Activated T-helper 2 cell treated with anti-CD3 and anti-CD28 coated beads, Interferon-gamma antibody, Interleukin-2, Interleukin-4, amounts not matched to agents 10 μg/mL and 5 μg/mL and 100 μg/mL, durations not matched to agents 14 hours and 24 hours and 36 hours (primary cell): ENCODE measurements at regions of chr3 and their contacts with region 1.

Region 1: DNA sequence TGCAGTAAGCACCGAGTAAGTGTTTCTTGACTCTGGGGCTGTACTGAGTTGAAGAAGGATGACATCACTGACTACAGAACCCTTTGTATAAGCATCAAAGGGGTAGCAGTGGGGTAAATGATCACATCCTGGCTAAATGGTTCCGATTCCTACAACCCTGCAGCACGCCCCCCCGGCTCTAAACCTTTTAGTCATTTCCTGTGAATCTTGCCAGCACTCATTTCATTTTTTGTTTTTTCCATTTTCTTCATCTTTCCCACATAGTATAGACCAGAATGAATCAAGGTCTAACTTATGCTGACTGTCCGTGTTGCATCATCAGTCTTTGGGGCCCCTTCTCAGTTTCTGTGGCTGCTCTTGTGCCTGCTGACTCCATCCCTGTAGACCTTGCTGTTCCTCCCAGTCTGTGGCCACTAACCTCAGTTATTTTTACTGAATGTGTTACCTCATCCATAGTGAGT is 383.1 kb upstream of the TPRG1 start:
- DNase-seq: peak; percentile 42
- H3K4me3 Mint-ChIP-seq: no peak overlapping the region
- H3K27ac Mint-ChIP-seq: no peak overlapping the region
- H3K4me1 Mint-ChIP-seq: peaks cover 2% of the 10 kb centered on the region
- H3K27me3 Mint-ChIP-seq: no peaks in the 10 kb centered on the region

Region 2: GRCh38 chr3:188294823-188295487 is 493.7 kb before region 1 on chr3:
- intact Hi-C with region 1: loop called (anchors 5 kb)
- DNase-seq: no peak
- H3K4me3 Mint-ChIP-seq: no peak overlapping the region
- H3K27ac Mint-ChIP-seq: no peak overlapping the region
- H3K4me1 Mint-ChIP-seq: peaks cover 66% of the 10 kb centered on the region
- H3K27me3 Mint-ChIP-seq: no peaks in the 10 kb centered on the region

Region 3: DNA sequence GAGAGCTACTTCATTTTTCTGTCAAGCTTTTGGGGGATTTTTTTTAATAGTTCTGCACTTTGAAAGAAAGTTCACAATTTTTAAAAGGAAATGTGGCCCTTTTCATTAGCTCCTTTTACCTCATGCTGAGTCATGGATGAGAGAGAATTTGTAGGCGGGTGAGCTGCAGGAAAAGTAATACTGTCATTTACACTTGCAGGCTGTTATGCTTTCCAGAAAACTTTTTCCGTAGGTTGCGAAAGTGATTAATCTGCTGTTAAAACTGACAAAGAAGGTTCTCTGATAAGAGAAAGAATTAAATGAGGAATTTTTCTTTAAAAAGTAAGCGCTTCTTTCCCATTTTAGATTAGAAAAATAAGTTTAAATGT is 204.5 kb before region 1 on chr3:
- intact Hi-C with region 1: loop called (anchors 1 kb)
- DNase-seq: no peak
- H3K4me3 Mint-ChIP-seq: peak overlapping the region; percentile 13
- H3K27ac Mint-ChIP-seq: peak overlapping the region; percentile 86
- H3K4me1 Mint-ChIP-seq: peaks cover 30% of the 10 kb centered on the region
- H3K27me3 Mint-ChIP-seq: no peaks in the 10 kb centered on the region

Region 4: DNA sequence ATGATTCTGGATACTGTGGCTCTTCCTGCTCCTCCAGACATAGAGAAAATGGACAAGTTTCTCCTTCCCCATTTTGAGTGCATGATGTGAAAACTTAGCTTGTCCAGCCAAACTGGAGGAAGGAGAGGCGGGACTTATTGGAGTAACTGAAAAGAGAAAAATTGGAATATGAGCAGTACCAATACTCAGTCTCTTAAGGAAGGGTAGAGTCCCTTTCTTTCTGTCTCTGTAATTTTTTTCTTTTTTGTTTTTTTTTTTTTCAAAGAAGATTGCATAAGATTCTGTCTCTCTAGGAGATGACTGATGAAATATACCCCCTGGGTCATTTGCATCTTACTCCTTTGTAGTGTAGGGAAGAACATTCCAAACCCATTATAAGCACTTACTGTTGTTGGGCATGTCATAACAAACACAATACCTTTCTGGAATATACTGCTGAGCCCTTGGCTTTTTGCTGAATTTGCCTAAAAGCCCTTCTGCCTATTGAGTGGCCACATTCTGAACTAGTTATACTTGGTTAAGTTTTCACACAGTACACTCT is 114.9 kb before region 1 on chr3:
- intact Hi-C with region 1: no loop called
- DNase-seq: no peak
- H3K4me3 Mint-ChIP-seq: no peak overlapping the region
- H3K27ac Mint-ChIP-seq: no peak overlapping the region
- H3K4me1 Mint-ChIP-seq: peaks cover 2% of the 10 kb centered on the region
- H3K27me3 Mint-ChIP-seq: no peaks in the 10 kb centered on the region

Region 5: GRCh38 chr3:188697127-188697526 is 91.5 kb before region 1 on chr3:
- intact Hi-C with region 1: loop called (anchors 1 kb)
- DNase-seq: no peak
- H3K4me3 Mint-ChIP-seq: no peak overlapping the region
- H3K27ac Mint-ChIP-seq: no peak overlapping the region
- H3K4me1 Mint-ChIP-seq: peaks cover 30% of the 10 kb centered on the region
- H3K27me3 Mint-ChIP-seq: peaks cover 2% of the 10 kb centered on the region

Region 6: GRCh38 chr3:188752850-188753249 is 35.8 kb before region 1 on chr3:
- intact Hi-C with region 1: loop called (anchors 1 kb)
- DNase-seq: no peak
- H3K4me3 Mint-ChIP-seq: no peak overlapping the region
- H3K27ac Mint-ChIP-seq: no peak overlapping the region
- H3K4me1 Mint-ChIP-seq: peaks cover 19% of the 10 kb centered on the region
- H3K27me3 Mint-ChIP-seq: peaks cover 3% of the 10 kb centered on the region

Region 7: DNA sequence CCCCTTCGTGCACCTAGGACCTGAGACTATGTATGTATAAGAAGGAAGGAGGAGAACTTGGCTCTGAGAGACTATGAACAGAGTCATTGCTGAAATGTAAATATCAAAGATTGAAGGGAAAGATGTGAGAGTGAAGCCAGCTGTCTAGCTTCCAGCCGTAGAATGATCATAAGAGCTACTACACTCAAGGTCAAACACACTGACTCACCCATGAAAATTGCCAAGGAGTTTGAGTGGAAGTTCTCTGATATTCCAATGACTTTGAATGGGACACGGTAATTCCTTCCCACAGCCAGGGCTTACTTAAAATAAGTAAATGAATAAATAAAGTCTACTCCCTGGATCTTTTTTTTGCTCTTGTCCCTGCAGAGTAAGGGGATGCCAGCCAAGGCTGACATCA is 15.8 kb before region 1 on chr3:
- intact Hi-C with region 1: no loop called
- DNase-seq: no peak
- H3K4me3 Mint-ChIP-seq: no peak overlapping the region
- H3K27ac Mint-ChIP-seq: no peak overlapping the region
- H3K4me1 Mint-ChIP-seq: no peaks in the 10 kb centered on the region
- H3K27me3 Mint-ChIP-seq: no peaks in the 10 kb centered on the region

Region 8: DNA sequence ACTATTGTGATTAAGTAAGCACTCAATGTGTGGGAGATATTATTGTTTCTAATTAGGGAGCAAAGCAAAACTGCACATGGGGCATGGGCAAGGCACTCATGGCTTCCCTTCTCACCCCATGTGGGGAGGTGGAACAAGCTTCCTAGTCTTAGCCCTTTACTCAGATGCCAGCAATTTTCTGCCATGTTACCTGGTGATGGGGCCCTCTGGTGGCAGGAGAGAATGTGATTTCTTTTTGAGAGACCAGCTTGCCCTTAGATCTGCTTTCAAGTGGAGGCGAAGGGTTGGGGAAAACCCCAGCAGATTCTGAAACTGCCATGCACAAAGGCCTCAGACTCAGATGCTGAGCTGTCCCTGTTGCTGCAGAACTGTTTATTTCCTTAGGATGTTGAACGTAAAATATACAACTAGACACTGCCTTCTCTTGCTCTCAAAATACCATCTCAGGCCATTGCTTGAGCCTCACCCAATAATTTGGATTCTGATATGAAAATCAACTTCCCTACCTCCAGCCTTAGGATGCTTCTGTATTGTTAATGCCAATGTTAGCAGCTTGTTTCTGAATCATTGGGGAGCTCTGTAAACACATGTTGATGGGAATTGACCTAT is 252.9 kb after region 1 on chr3:
- intact Hi-C with region 1: loop called (anchors 2 kb)
- DNase-seq: peak; percentile 76
- H3K4me3 Mint-ChIP-seq: no peak overlapping the region
- H3K27ac Mint-ChIP-seq: peak overlapping the region; percentile 25
- H3K4me1 Mint-ChIP-seq: peaks cover 51% of the 10 kb centered on the region
- H3K27me3 Mint-ChIP-seq: no peaks in the 10 kb centered on the region